Posterior cingulate gyrus (tissue), 11 donors: ENCODE measurements at regions of chr10 and their contacts with region 1.

Region 1: DNA sequence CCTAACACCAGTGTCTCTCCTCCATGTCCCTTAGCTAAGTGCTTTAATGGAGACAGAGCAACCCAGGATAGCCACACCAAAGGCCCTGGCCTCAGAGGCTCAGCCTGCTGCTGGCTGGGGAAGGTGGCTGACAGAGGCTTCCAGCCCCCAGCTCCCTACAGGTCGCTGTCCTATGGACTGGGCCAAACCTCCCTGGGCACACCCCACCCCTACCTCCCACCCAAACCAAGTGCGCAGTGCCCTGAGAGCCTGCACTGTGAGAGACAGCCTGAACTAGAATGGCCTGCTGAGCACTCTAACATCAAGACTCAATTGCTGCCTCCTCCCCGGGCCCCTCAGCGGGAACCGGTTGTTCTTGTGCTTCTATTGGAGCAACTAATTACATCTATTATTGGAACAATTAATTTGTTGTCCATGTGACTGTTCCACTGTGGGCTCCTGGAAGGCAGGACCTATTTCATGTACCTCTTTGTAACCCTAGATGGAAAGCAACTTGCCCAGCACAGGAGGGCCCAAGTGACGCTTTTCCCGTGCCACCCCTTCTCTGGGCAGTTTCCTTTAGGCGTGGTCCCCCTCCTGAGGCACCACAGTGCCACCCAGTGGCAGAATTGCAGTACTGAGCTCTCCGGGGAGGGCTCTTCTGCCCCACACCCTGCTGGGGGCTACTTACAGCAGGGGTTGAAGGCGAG is 63.6 kb upstream of the WAPL start:
- DNase-seq: peak; percentile 51 to 96 (median 78)

Region 2: DNA sequence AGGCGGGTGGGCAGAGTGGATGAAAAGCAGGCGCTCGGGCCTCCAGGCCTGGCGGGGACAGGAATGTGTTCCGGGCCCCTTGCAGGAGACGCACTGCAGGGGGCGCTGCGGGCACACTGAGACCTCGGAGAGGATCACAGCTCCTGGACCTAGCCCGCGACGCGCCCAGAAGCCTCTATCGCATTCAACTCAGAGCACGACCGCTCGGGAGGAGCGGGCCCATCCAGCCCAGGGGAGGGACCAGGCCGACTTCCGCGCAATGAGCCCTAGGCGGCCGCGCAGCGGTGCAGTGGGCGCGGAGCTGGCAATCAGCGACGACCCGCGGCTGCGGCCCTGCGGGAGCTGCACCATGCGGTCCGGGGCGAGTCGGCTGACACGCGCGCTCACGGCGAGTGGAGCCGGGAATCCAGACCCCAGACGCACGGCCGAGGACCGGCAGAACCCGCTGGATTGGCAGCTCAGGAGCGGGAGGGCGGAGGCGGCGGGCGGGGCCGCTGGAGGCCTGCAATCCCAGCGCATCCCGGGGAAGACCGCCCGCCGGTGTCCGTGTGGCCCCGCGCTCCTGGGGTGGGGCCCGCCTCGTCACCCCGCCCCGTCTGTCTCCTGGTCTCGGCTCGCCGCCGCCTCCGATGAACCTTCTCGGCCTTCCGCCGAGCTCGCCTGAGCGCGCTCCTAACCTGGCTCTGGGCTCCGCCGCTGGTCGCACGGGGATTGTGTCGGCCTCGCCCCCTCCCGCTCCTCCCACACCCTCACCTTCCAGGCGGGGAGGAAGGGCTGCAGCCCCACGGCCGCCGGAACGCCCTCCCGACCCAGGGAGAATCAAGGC is 185.1 kb before region 1 on chr10:
- intact Hi-C with region 1: loop called (anchors 1 kb)
- DNase-seq: peak; percentile 89 to 99 (median 96)

Region 3: GRCh38 chr10:86521678-86522509 is 63.3 kb before region 1 on chr10 and contains the start of gene WAPL:
- intact Hi-C with region 1: loop called (anchors 5 kb)
- DNase-seq: peak; percentile 92 to 99 (median 94)

Region 4: DNA sequence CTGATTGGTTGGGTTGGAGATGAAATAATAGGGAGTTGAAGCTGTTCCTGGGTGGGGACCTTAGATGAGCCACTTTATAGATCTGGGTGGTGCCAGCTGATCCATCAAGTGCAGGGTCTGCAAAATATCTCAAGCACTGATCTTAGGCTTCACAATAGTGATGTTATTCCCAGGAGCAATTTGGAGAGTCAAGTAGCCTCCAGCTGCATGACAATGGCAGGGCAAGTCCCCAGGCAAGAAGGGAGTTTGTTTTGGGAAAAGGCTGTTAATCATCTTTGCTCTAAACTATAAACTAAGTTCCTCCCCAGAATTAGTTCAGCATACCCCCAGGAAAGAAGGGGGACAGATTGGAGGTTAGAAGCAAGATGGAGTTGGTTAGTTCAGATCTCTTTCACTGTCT is 15.8 kb before region 1 on chr10:
- intact Hi-C with region 1: no loop called
- DNase-seq: no peak

Region 5: GRCh38 chr10:86857128-86857721 is 272.0 kb after region 1 on chr10:
- intact Hi-C with region 1: no loop called
- DNase-seq: no peak